Breast epithelium (tissue), 4 donors: ENCODE measurements at regions of chr6 and their contacts with region 1.

Region 1: DNA sequence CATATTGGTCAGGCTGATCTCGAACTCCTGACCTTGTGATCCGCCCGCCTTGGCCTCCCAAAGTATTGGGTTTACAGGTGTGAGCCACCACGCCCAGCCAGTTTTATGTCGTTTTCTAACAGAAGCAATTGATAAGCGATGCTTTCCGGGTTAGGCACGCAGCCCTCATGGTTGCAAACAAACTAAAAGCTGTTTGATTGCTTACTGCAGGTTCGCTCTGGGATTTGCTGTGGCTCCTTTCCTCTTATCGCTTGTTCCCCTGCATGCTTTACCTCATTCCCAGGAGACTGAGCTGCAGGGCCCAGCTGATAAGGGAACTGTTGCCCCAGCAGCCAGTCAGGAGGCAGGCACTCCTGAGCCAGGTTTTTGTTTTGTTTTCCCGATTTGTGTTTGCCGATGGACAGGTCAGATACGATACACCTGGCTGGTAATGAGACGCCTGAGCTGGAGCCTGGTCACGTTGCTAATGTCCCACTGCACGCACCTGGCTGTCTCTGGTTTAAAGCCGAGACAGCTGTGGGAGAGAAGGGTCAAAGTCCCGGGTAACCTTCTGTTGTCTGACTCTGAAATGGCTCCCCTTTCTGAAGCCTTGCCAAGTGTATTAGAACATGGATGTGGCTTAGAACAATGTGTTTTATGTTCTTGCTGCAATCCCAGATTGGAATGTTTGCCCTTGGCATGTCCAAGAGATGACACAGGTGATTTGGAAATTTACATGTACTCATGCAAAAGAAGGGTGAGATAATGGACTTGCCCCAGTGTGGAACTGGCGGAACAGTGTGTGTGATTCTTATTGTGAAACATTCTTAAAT is 19.9 kb downstream of the DSP start:
- DNase-seq: peak in 1 of 2 donors; percentile 77
- H3K4me3 ChIP-seq: peak overlapping the region in 2 of 3 donors; percentile 1 to 17
- H3K27ac ChIP-seq: peak overlapping the region; percentile 70 to 74
- H3K4me1 ChIP-seq: no peaks in the 10 kb centered on the region
- H3K27me3 ChIP-seq: no peaks in the 10 kb centered on the region
- CTCF ChIP-seq: no peak
- POLR2A ChIP-seq: no peak

Region 2: DNA sequence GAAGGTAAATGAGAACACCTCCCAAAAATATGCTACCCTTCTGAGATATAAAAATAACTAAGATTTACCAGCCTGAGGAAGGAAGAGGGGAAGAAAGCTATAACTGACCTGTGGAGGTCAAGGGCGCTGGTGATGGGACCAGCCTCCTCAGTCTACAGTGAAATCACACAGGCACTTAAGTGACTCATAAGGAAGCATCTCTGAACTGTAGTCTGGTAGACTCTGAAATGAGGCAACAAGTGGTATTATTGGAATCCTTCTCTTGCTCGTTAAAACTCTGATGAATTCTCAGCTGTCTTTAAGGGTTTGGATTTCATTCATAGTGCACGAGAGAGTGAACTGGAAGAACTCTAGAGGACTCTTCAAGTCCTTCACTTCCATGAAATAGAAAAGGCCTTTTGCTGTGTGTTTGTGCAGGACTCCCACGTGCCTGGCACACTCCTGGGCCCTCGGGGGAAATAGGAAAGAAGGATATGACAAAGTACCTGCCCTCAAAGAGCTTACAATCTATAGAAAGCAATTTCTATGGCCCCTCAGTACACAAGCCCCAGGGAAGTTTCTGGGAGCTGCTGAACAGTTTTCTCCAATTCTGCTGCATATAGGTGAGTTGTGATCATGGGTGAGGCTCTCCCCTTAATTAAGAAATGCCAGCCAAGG is 685.4 kb before region 1 on chr6:
- intact Hi-C with region 1: loop called (anchors 5 kb)
- DNase-seq: no peak
- H3K4me3 ChIP-seq: no peak overlapping the region
- H3K27ac ChIP-seq: no peak overlapping the region
- H3K4me1 ChIP-seq: no peaks in the 10 kb centered on the region
- H3K27me3 ChIP-seq: no peaks in the 10 kb centered on the region
- CTCF ChIP-seq: no peak
- POLR2A ChIP-seq: no peak